IMR-90 (cell line): ENCODE measurements at regions of chr1 and their contacts with region 1.

Region 1: DNA sequence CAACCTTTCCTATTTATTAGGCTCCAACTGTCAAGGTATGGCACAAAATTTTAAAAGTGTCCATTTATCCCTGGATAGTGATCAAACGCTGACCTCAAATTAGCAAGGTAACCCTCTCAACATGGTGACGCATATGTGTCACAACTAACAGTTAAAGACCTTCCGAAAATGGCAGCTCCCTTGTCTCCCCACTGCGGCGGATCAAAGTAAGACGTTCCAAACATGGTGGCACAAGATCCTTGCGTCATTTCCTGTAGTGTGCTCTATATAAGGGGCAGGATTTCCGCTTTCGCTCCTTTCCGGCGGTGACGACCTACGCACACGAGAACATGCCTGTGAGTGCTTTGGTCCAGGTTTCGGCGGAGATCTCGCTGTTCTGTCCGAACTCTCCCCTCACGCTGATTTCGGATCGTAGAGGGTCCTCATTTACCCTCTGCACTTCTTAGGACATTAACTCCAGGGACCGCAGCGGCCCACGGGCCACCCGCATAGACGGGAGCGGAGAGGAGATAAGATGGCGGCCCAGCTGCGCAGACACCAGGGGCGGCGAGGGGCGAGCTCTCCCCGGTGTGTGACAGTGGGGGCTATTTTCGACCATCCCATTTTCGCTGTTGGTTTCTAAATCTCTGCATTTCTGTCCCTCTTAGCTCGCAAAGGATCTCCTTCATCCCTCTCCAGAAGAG is at the start of gene RPS27:
- DNase-seq: peak; percentile 99
- ATAC-seq: peak; percentile 55
- H3K4me3 ChIP-seq: peak within 1 kb of the TSS; percentile 57
- H3K27ac ChIP-seq: peak within 1 kb of the TSS; percentile 83
- H3K4me1 ChIP-seq: 0 out of 2 replicates have a peak, but pooled peaks cover 2% of the 10 kb centered on the region
- H3K27me3 ChIP-seq: no peaks in the 10 kb centered on the region
- CTCF ChIP-seq: no peak
- POLR2A ChIP-seq: peak; percentile 100
- RAD21 ChIP-seq: no peak
- total RNA-seq, gene RPS27: 320 and 1,119 TPM in 2 replicates

Region 2: DNA sequence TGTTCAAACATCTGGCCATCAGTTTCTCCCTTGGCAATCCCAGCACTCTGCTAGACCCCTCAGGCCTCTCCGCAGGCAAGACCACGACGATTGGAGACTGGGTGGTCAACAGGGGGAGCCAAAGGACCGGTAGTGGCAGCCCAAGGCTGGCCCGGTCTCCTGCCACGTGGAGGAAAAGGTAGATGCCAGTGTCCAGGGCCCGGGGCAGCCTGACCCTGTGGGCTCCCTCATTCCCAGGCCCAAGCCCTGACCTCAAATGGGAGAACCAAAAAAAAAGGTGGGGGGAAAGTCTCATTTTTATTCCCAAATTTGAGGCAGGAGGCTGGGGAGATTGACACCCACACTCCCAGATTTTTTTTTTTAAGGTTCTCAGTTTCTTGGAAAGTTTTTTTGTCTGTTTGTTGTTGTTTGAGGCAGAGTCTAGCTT is 479.6 kb before region 1 on chr1:
- CTCF ChIA-PET with region 1: no interaction called
- POLR2A ChIA-PET with region 1: no interaction called
- dilution Hi-C with region 1: no loop called
- in situ Hi-C with region 1: no loop called
- intact Hi-C with region 1: loop called (anchors 10 kb)
- DNase-seq: peak; percentile 74
- ATAC-seq: peak; percentile 69
- H3K4me3 ChIP-seq: no peak overlapping the region
- H3K27ac ChIP-seq: no peak overlapping the region
- H3K4me1 ChIP-seq: peaks cover 19% of the 10 kb centered on the region
- H3K27me3 ChIP-seq: no peaks in the 10 kb centered on the region
- CTCF ChIP-seq: peak; percentile 97
- POLR2A ChIP-seq: 0 out of 2 replicates have a peak, but pooled peaks have one; percentile 33
- RAD21 ChIP-seq: peak; percentile 97

Region 3: DNA sequence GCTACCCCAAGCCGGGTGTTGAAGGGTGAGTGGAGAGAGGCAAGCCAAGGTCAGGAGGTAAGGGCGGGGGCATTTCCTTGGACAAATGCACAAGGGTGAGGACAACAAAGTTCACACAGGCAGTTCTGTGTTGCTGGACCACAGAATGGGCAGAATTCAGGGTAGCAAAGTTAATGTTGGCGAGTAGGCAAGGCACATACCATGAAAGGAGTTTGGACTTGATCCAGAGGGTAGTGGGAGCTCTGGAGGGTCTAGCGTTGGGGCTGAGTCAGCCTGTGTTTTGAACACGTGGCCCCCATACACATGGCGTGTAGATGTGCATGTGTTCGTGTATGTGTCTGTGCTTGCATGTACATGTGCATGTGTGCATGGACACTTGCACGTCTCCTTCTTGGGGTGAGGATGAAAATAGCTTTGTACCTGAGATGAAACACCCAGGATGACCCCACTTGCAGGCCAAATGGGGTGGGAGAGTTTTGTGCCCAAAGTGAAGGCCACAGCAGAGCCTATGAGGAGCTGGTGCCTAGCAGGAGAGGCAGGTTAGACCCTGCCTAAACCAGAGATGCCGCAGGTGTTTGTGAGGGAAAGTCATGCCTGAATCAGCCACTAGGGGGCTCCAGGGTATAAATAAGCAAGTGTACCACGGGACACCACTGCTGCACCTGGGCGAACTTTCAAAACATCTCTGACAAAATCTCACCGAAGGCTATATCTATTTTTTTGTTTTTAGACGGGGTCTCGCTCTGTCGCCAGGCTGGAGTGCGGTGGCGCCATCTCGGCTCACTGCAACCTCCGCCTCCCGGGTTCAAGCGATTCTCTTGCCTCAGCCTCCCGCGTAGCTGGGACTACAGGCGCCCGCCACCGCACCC is 193.6 kb before region 1 on chr1:
- CTCF ChIA-PET with region 1: no interaction called
- POLR2A ChIA-PET with region 1: no interaction called
- dilution Hi-C with region 1: no loop called
- in situ Hi-C with region 1: no loop called
- intact Hi-C with region 1: loop called (anchors 1 kb)
- DNase-seq: peak; percentile 61
- ATAC-seq: peak; percentile 76
- H3K4me3 ChIP-seq: no peak overlapping the region
- H3K27ac ChIP-seq: no peak overlapping the region
- H3K4me1 ChIP-seq: no peaks in the 10 kb centered on the region
- H3K27me3 ChIP-seq: no peaks in the 10 kb centered on the region
- CTCF ChIP-seq: peak; percentile 79
- POLR2A ChIP-seq: no peak
- RAD21 ChIP-seq: peak; percentile 75

Region 4: GRCh38 chr1:153842006-153842471 is 148.6 kb before region 1 on chr1:
- CTCF ChIA-PET with region 1: no interaction called
- POLR2A ChIA-PET with region 1: interaction called, 10 read pairs
- dilution Hi-C with region 1: no loop called
- in situ Hi-C with region 1: no loop called
- intact Hi-C with region 1: no loop called
- DNase-seq: peak; percentile 12
- ATAC-seq: no peak
- H3K4me3 ChIP-seq: no peak overlapping the region
- H3K27ac ChIP-seq: no peak overlapping the region; the same call in 1 of the 2 replicates
- H3K4me1 ChIP-seq: no peaks in the 10 kb centered on the region
- H3K27me3 ChIP-seq: no peaks in the 10 kb centered on the region
- CTCF ChIP-seq: no peak
- POLR2A ChIP-seq: no peak
- RAD21 ChIP-seq: no peak

Region 5: DNA sequence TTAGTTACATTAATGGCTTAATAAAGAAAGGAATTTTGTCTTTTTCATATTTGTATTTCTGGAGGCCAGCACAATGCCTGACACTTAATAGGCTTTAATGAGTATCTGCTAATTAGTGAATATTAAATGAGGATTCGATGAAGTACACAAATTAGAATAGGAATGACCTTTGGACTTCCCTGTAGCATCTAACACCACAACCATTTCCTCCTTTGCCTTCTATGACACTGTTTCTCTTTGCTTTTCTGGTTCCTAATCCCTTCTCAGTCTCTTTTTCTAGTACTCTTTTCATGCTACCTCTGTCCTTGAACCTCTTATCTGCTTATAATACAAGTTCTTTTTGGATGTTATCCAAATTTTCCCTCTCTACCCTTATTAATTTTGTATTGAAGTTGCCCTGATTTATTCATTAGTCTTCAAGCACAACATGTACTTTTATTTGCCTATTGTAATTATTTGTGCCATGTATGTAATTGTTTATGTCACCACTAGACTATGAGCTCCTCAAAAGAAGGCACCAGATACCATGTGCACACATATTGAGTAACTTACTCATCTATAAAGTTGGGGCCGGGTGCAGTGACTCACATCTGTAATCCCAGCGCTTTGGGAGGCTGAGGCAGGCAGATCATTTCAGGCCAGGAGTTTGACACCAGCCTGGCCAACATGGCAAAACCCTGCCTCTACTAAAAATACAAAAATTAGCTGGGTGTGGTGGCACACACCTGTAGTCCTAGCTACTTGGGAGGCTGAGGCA is 23.7 kb after region 1 on chr1:
- CTCF ChIA-PET with region 1: no interaction called
- POLR2A ChIA-PET with region 1: interaction called, 18 read pairs
- dilution Hi-C with region 1: no loop called
- in situ Hi-C with region 1: no loop called
- intact Hi-C with region 1: no loop called
- DNase-seq: peak; percentile 76
- ATAC-seq: peak; percentile 88
- H3K4me3 ChIP-seq: no peak overlapping the region
- H3K27ac ChIP-seq: no peak overlapping the region
- H3K4me1 ChIP-seq: no peaks in the 10 kb centered on the region
- H3K27me3 ChIP-seq: no peaks in the 10 kb centered on the region
- CTCF ChIP-seq: no peak
- POLR2A ChIP-seq: no peak
- RAD21 ChIP-seq: no peak

Region 6: GRCh38 chr1:154145986-154146385 is 155.4 kb after region 1 on chr1:
- CTCF ChIA-PET with region 1: no interaction called
- POLR2A ChIA-PET with region 1: no interaction called
- dilution Hi-C with region 1: no loop called
- in situ Hi-C with region 1: no loop called
- intact Hi-C with region 1: no loop called
- DNase-seq: no peak
- ATAC-seq: no peak
- H3K4me3 ChIP-seq: no peak overlapping the region
- H3K27ac ChIP-seq: no peak overlapping the region
- H3K4me1 ChIP-seq: 0 out of 2 replicates have a peak, but pooled peaks cover 1% of the 10 kb centered on the region
- H3K27me3 ChIP-seq: no peaks in the 10 kb centered on the region
- CTCF ChIP-seq: peak; percentile 35; the same call in 1 of the 2 replicates
- POLR2A ChIP-seq: no peak
- RAD21 ChIP-seq: no peak

Region 7: GRCh38 chr1:154183045-154183915 is 192.7 kb after region 1 on chr1:
- CTCF ChIA-PET with region 1: no interaction called
- POLR2A ChIA-PET with region 1: no interaction called
- dilution Hi-C with region 1: no loop called
- in situ Hi-C with region 1: no loop called
- intact Hi-C with region 1: loop called (anchors 2 kb)
- DNase-seq: peak; percentile 94
- ATAC-seq: peak; percentile 86
- H3K4me3 ChIP-seq: peak overlapping the region; percentile 87
- H3K27ac ChIP-seq: peak overlapping the region; percentile 93
- H3K4me1 ChIP-seq: peaks cover 12% of the 10 kb centered on the region
- H3K27me3 ChIP-seq: no peaks in the 10 kb centered on the region
- CTCF ChIP-seq: 0 out of 2 replicates have a peak, but pooled peaks have one; percentile 7
- POLR2A ChIP-seq: peak; percentile 82
- RAD21 ChIP-seq: no peak